Activated naive CD4-positive, alpha-beta T cell treated with anti-CD3 and anti-CD28 coated beads for 36 hours (primary cell): ENCODE measurements at regions of chr11 and their contacts with region 1.

Region 1: GRCh38 chr11:116772443-116773202 is at the start of gene BUD13:
- DNase-seq: peak; percentile 96
- H3K4me3 Mint-ChIP-seq: peak within 1 kb of the TSS; percentile 99
- H3K27ac Mint-ChIP-seq: peak within 1 kb of the TSS; percentile 97
- H3K4me1 Mint-ChIP-seq: peaks cover 48% of the 10 kb centered on the region
- H3K27me3 Mint-ChIP-seq: no peaks in the 10 kb centered on the region
- total RNA-seq, gene BUD13: 35.0 to 37.7 TPM

Region 2: DNA sequence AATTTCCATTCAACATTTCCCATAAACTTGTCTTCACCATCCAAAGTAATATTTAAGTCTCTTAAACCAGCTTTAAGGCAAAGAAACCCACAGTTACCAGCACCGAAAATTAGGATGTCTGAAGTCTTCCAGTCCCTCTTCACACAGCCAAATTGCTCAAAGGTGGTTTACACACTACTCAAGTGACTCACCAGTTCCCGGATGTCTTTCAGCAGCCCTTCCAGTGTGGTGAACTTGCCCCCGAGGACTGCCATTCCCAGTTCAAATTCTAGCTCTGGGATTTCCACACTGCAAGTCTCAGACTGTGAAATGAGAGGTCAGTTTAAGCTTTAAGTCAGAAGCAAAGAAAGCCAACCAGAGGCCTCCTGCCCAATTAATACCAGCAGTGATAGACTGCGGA is 10.1 kb after region 1 on chr11:
- CTCF ChIA-PET with region 1: interaction called, 5 read pairs
- intact Hi-C with region 1: loop called (anchors 1 kb)
- DNase-seq: no peak
- H3K4me3 Mint-ChIP-seq: no peak overlapping the region
- H3K27ac Mint-ChIP-seq: peak overlapping the region; percentile 71
- H3K4me1 Mint-ChIP-seq: peaks cover 84% of the 10 kb centered on the region
- H3K27me3 Mint-ChIP-seq: no peaks in the 10 kb centered on the region

Region 3: DNA sequence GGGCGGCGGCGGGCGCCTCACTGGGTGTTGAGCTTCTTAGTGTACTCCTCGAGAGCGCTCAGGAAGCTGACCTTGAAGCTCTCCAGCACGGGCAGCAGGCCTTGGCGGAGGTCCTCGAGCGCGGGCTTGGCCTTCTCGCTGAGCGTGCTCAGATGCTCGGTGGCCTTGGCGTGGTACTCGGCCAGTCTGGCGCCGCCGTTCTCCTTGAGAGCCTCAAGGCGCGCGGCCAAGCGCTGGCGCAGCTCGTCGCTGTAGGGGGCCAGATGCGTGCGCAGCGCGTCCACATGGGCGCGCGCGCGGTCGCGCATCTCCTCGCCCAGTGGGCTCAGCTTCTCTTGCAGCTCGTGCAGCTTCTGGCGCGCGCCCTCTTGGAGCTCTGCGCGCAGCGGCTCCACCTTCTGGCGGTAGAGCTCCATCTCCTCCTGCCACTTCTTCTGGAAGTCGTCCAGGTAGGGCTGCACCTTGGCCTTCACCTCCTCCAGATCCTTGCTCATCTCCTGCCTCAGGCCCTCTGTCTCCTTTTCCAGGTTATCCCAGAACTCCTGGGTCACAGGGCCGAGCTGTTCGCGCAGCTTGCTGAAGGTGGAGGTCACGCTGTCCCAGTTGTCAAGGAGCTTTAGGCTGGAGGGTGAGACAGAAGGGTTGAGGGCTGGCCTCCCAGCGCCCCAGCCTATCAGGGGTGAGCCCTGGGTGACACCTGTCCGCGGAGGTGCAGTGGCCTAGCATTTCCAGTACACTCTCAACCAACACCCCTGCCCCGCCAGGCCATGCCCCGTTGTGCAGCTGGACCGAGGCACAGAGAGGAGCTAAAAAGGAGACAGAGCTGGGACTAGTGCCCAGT is 63.4 kb after region 1 on chr11:
- CTCF ChIA-PET with region 1: interaction called, 21 read pairs
- intact Hi-C with region 1: no loop called
- DNase-seq: peak; percentile 86
- H3K4me3 Mint-ChIP-seq: peak overlapping the region; percentile 69
- H3K27ac Mint-ChIP-seq: no peak overlapping the region
- H3K4me1 Mint-ChIP-seq: peaks cover 8% of the 10 kb centered on the region
- H3K27me3 Mint-ChIP-seq: peaks cover 4% of the 10 kb centered on the region

Region 4: DNA sequence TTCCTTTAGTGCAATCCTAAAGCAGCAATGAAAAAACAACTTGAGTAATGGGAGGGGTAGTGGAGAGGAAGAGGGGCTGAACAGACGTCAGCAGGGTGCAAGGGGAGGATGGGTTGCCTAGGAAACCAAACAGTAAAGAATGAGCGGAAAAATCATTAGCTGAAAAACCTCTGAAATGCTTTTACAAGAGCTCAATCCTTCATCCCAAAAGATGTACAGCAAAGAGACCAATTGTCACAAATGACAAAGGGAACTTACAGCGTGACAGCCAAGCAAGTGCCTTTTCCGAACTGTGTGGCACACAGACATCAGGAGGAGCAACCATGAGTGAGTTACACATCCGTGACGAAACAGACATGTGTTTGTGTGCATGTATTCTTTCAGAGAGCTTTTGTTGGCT is 221.0 kb after region 1 on chr11:
- CTCF ChIA-PET with region 1: no interaction called
- intact Hi-C with region 1: no loop called
- DNase-seq: peak; percentile 43
- H3K4me3 Mint-ChIP-seq: peak overlapping the region; percentile 48
- H3K27ac Mint-ChIP-seq: peak overlapping the region; percentile 19
- H3K4me1 Mint-ChIP-seq: peaks cover 54% of the 10 kb centered on the region
- H3K27me3 Mint-ChIP-seq: no peaks in the 10 kb centered on the region

Region 5: DNA sequence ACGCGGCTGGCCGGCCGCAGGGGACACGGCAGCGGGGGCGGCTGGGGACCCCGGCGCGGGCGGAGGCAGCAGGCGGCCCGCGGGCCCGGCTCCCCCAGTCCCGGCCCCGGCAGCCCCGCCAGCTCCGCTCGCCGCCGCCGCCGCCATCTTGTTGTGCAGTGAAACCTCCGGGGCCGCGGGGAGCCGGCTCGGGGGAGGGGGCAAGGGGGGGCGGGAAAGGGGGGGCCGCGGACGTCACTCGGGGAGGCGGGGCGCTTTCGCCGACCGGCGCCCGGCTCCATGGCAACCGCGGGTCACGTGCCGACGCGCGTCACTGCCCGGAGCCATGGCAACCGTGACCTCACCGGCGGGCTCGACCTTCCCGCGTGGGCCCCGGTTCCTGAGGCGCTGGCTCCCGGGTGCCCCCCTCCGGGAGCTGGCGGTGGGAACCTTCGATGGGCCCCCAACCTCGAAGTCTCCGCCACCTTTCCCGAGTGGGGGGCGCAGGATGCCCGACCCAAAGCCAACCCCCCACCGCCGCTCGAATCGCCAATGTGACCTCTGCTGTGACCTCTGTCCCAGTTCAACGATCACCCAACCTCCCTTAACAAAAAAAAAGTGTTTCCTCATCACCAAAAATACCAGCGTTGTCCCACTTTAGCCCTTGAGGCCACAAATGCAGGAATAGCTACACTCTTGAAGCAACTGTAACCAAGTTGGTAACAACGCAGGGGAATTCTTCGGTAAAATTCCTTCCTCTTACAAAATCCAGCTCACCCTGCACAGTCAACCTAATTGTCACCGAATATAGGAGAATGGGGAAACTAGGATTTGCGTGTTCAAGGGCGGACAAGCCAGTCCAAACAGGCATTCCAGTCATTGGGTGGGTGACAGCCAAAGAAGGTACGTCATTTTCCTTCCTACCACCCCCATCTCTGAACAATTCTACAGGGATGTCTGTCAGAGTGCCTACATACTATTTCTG is 325.9 kb after region 1 on chr11 and contains the start of gene SIK3:
- CTCF ChIA-PET with region 1: no interaction called
- intact Hi-C with region 1: loop called (anchors 2 kb)
- DNase-seq: peak; percentile 90
- H3K4me3 Mint-ChIP-seq: peak within 1 kb of the TSS; percentile 97
- H3K27ac Mint-ChIP-seq: peak within 1 kb of the TSS; percentile 89
- H3K4me1 Mint-ChIP-seq: peaks cover 47% of the 10 kb centered on the region
- H3K27me3 Mint-ChIP-seq: no peaks in the 10 kb centered on the region
- total RNA-seq, gene SIK3: 13.8 to 15.7 TPM

Region 6: GRCh38 chr11:117178210-117179034 is 405.8 kb after region 1 on chr11 and contains the start of gene SIDT2:
- CTCF ChIA-PET with region 1: interaction called, 5 read pairs
- intact Hi-C with region 1: loop called (anchors 1 kb)
- DNase-seq: peak; percentile 92
- H3K4me3 Mint-ChIP-seq: peak within 1 kb of the TSS; percentile 93
- H3K27ac Mint-ChIP-seq: peak within 1 kb of the TSS; percentile 79
- H3K4me1 Mint-ChIP-seq: peaks cover 28% of the 10 kb centered on the region
- H3K27me3 Mint-ChIP-seq: no peaks in the 10 kb centered on the region
- total RNA-seq, gene SIDT2: 23.9 to 25.6 TPM

Region 7: DNA sequence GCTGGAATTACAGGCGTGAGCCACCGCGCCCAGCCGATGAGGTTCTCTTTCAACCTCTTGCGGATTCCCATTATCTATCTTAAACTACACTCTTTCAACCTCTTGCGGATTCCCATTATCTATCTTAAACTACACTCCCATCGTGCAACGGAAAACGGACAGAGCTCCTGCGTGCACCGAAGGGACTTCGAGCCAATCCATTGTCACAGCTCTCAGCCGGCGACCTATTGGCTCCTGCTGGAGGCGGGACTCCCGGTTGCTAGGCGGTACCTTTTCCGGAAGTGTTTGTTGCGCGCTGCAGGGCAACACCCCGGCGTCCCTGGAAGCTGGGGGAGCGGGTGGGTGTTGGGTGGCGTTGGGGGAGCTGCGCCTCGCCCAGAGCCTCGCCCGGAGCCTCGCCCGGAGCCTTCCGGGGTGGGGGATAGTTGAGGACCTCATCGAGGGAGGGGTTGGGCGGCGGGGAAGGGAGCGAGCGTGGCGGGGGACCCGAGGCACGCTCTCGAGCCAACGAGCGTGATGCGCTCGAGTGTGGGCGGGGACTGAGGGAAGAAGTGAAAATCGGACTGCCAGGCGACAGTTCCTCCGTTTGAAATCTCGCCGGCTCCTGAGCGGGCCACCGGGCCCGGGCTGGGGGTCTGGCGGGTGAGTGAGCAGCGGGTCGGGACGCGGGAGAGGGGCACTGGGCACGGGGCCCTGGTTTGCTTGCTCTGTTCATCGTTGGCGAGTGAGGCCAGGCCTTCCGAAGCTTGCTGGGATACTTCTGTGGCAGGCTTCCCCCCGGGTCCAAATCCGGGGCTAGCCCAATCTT is 555.1 kb after region 1 on chr11 and contains the start of gene CEP164:
- CTCF ChIA-PET with region 1: no interaction called
- intact Hi-C with region 1: loop called (anchors 1 kb)
- DNase-seq: peak; percentile 97
- H3K4me3 Mint-ChIP-seq: peak within 1 kb of the TSS; percentile 61
- H3K27ac Mint-ChIP-seq: peak within 1 kb of the TSS; percentile 71
- H3K4me1 Mint-ChIP-seq: peaks cover 3% of the 10 kb centered on the region
- H3K27me3 Mint-ChIP-seq: no peaks in the 10 kb centered on the region
- total RNA-seq, gene CEP164: 23.9 to 24.6 TPM